ENCODE measurements at regions of chr19 and their contacts with region 1.

Region 1: DNA sequence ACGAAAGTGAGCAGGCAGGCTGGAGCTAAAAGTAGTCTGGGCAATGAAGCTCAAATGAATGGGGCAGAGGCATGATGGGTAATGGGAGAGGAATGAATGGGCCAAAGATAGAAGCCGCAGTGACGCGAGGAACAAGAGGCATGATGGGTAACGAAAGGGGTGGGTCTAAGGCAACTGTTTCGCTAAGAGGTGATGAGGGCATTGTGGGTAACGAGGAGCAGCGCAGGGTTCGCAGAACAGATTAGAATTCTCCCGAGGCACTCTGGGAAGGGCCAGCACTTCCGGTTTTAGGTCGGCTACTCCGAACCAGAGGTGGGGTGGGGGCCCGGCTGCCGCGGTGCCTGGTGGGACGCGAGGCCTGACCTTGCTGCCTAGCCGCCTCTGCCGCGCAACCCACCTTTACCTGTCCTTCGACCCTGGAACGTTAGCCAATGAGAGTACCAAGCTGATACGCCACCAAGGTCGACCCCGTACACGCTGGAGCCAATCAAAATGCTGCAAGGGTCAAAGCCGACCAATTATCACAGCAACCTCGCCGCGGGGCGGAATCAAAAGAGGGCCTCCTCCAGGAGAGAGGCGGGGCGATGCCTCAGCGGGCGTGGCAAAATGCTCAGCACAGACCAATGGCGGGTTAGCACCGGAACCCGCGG is 563 bp upstream of the TOMM40 start:
- DNase-seq: peak; percentile 98
- ATAC-seq: peak; percentile 77
- H3K4me3 Mint-ChIP-seq: peak overlapping the region; percentile 83
- H3K27ac Mint-ChIP-seq: peak overlapping the region; percentile 87
- H3K4me1 Mint-ChIP-seq: peaks cover 34% of the 10 kb centered on the region
- H3K27me3 Mint-ChIP-seq: no peaks in the 10 kb centered on the region
- CTCF ChIP-seq: no peak

Region 2: GRCh38 chr19:44752816-44753618 is 137.5 kb before region 1 on chr19:
- CTCF ChIA-PET with region 1: no interaction called
- POLR2A ChIA-PET with region 1: interaction called, 4 read pairs
- intact Hi-C with region 1: loop called (anchors 1 kb)
- DNase-seq: peak; percentile 87
- ATAC-seq: peak; percentile 76
- H3K4me3 Mint-ChIP-seq: peak overlapping the region; percentile 95
- H3K27ac Mint-ChIP-seq: peak overlapping the region; percentile 96
- H3K4me1 Mint-ChIP-seq: peaks cover 68% of the 10 kb centered on the region
- H3K27me3 Mint-ChIP-seq: no peaks in the 10 kb centered on the region
- CTCF ChIP-seq: no peak

Region 3: DNA sequence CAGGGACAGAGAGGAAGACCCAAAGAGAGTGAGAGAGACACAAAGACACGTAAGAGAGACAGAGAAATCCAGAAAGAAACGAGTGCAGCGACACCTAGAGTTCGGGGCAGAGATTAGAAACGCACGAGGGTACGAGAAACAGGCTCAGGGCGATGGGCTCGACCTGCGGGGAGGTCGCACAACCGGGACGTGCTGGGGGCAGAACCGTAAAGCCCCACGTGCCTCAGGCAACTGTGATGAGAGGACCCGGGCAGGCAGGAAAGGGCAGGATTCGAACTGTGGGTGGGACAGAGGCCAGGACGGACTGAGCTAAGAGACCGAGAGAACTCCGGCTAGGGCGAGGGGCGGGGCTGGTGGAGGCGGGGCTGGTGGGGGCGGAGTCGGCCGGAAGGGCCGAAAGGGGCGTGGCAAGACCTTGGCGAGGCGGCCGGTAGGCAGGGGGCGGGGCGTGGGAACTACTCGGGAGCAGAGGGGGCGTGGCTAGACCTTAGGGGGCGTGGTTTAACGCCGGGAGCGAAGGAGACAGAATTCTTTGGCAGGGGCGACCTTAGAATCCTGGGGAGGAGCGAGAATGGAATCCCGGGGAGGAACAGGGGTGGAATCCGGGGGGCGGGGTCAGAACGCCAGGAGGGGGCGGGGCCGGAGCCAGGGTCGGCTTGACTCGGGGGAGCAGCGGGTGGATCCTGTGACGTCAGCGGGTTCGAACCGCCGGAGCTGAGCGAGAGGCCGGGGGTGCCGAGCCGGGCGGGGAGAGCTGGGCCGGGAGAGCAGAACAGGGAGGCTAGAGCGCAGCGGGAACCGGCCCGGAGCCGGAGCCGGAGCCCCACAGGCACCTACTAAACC is 44.7 kb before region 1 on chr19 and contains the start of gene NECTIN2:
- CTCF ChIA-PET with region 1: no interaction called
- POLR2A ChIA-PET with region 1: no interaction called
- intact Hi-C with region 1: loop called (anchors 1 kb)
- DNase-seq: peak; percentile 68
- ATAC-seq: peak; percentile 73
- H3K4me3 Mint-ChIP-seq: peak within 1 kb of the TSS; percentile 89
- H3K27ac Mint-ChIP-seq: peak within 1 kb of the TSS; percentile 38
- H3K4me1 Mint-ChIP-seq: peaks cover 31% of the 10 kb centered on the region
- H3K27me3 Mint-ChIP-seq: peaks cover 32% of the 10 kb centered on the region
- CTCF ChIP-seq: no peak
- total RNA-seq, gene NECTIN2: 0.17 and 0.35 TPM in 2 replicates

Region 4: DNA sequence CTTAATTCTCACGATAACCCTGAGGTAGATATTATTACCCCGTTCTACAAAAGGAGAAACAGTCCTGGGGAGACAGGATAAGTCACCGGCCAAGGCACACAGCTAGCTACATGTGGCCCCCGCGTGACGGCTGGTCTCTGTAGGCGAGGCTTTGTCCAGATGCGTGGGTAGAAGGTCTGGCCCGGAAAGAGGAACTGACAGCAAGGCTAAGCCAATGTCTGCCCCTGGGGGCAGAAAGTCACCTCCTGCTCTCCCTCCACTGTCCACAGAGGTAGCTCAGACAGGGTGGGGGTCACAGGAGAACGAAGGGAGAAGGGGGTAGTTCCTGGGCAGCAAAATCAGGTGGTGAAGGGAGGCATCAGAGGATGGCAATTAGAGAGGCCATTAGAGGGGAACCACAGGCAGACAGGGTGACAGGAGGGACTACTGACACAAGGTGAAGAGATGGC is 53.3 kb after region 1 on chr19:
- CTCF ChIA-PET with region 1: no interaction called
- POLR2A ChIA-PET with region 1: no interaction called
- intact Hi-C with region 1: no loop called
- DNase-seq: peak; percentile 34
- ATAC-seq: peak; percentile 94
- H3K4me3 Mint-ChIP-seq: peak overlapping the region; percentile 44
- H3K27ac Mint-ChIP-seq: peak overlapping the region; percentile 81
- H3K4me1 Mint-ChIP-seq: peaks cover 14% of the 10 kb centered on the region
- H3K27me3 Mint-ChIP-seq: no peaks in the 10 kb centered on the region
- CTCF ChIP-seq: no peak

Region 5: DNA sequence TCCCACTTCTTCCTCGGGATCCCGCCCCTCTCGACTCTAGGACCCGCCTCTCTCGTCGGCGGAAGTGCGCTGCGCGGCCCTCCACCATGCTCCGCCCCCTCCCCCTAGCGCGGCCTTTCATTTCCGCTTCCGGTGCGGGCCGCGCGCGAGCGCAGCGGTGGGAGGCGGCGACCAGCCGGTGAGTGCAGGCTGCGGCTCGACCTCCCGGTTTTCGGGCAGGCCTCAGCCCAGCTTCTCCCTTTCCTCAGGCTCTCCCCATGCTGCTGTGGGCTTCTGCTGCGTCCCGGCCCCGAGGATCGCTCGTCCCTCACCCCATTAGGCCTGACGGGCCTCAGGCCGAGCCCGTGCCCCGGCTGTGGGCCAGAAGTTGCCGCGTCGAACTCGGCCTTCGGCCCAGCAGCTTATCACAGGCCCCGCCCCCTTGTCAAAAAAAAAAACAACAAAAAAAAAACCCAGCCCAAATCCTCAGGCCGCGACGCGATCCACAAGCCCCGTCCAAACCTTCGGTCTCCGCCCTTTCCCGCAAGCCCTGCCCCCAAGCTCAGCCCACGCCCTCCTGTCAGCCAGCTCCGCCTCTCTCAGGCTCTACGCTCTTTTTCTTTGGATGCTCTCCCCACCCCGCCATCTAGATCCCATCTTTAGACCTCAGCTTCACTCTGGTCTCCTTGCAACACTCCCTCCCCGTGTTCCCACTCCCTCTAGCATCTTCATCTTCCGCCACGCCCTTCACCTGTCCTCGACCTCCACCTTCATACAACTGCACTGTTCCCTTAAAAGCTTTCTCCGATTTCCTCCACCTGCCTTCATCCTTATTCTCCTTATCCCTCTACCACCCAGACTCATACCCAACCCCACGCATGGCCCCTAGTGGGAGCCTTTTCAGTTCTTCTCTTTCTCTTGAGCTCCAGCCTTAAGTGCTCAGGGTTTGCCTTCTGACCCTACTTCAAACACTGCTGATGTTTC is 148.7 kb after region 1 on chr19 and contains the start of gene CLASRP:
- CTCF ChIA-PET with region 1: no interaction called
- POLR2A ChIA-PET with region 1: interaction called, 4 read pairs
- intact Hi-C with region 1: loop called (anchors 2 kb)
- DNase-seq: peak; percentile 90
- ATAC-seq: peak; percentile 89
- H3K4me3 Mint-ChIP-seq: peak within 1 kb of the TSS; percentile 98
- H3K27ac Mint-ChIP-seq: peak within 1 kb of the TSS; percentile 91
- H3K4me1 Mint-ChIP-seq: peaks cover 38% of the 10 kb centered on the region
- H3K27me3 Mint-ChIP-seq: no peaks in the 10 kb centered on the region
- CTCF ChIP-seq: no peak
- total RNA-seq, gene CLASRP: 133 and 172 TPM in 2 replicates

Region 6: GRCh38 chr19:45178262-45179071 is 288.0 kb after region 1 on chr19 and contains the start of gene BLOC1S3:
- CTCF ChIA-PET with region 1: no interaction called
- POLR2A ChIA-PET with region 1: interaction called, 8 read pairs
- intact Hi-C with region 1: loop called (anchors 1 kb)
- DNase-seq: peak; percentile 97
- ATAC-seq: peak; percentile 87
- H3K4me3 Mint-ChIP-seq: peak within 1 kb of the TSS; percentile 94
- H3K27ac Mint-ChIP-seq: peak within 1 kb of the TSS; percentile 96
- H3K4me1 Mint-ChIP-seq: peaks cover 51% of the 10 kb centered on the region
- H3K27me3 Mint-ChIP-seq: no peaks in the 10 kb centered on the region
- CTCF ChIP-seq: no peak
- total RNA-seq, gene BLOC1S3: 15.6 and 16.5 TPM in 2 replicates